MCF 10A (cell line): ENCODE measurements at regions of chr5 and their contacts with region 1.

Region 1: GRCh38 chr5:142108432-142109330 is at the start of gene NDFIP1:
- DNase-seq: peak; percentile 88
- H3K4me3 Mint-ChIP-seq: peak within 1 kb of the TSS; percentile 94
- H3K27ac Mint-ChIP-seq: peak within 1 kb of the TSS; percentile 86
- H3K4me1 Mint-ChIP-seq: peaks cover 16% of the 10 kb centered on the region
- H3K27me3 Mint-ChIP-seq: no peaks in the 10 kb centered on the region
- CTCF ChIP-seq: no peak
- total RNA-seq, gene NDFIP1: 50.8 and 61.6 TPM in 2 replicates

Region 2: GRCh38 chr5:141778206-141778605 is 330.5 kb before region 1 on chr5:
- CTCF ChIA-PET with region 1: no interaction called
- POLR2A ChIA-PET with region 1: no interaction called
- intact Hi-C with region 1: no loop called
- DNase-seq: peak; percentile 85
- H3K4me3 Mint-ChIP-seq: no peak overlapping the region
- H3K27ac Mint-ChIP-seq: peak overlapping the region; percentile 63
- H3K4me1 Mint-ChIP-seq: peaks cover 25% of the 10 kb centered on the region
- H3K27me3 Mint-ChIP-seq: no peaks in the 10 kb centered on the region
- CTCF ChIP-seq: no peak

Region 3: GRCh38 chr5:141992349-141992963 is 116.2 kb before region 1 on chr5:
- CTCF ChIA-PET with region 1: interaction called, 19 read pairs
- POLR2A ChIA-PET with region 1: interaction called, 3 read pairs
- intact Hi-C with region 1: no loop called
- DNase-seq: peak; percentile 88
- H3K4me3 Mint-ChIP-seq: no peak overlapping the region
- H3K27ac Mint-ChIP-seq: no peak overlapping the region
- H3K4me1 Mint-ChIP-seq: no peaks in the 10 kb centered on the region
- H3K27me3 Mint-ChIP-seq: no peaks in the 10 kb centered on the region
- CTCF ChIP-seq: peak; percentile 82

Region 4: GRCh38 chr5:142024771-142025304 is 83.8 kb before region 1 on chr5:
- CTCF ChIA-PET with region 1: interaction called, 5 read pairs
- POLR2A ChIA-PET with region 1: interaction called, 37 read pairs
- intact Hi-C with region 1: no loop called
- DNase-seq: peak; percentile 91
- H3K4me3 Mint-ChIP-seq: peak overlapping the region; percentile 83
- H3K27ac Mint-ChIP-seq: peak overlapping the region; percentile 96
- H3K4me1 Mint-ChIP-seq: peaks cover 6% of the 10 kb centered on the region
- H3K27me3 Mint-ChIP-seq: no peaks in the 10 kb centered on the region
- CTCF ChIP-seq: no peak

Region 5: GRCh38 chr5:142053426-142054151 is 55.1 kb before region 1 on chr5:
- CTCF ChIA-PET with region 1: interaction called, 6 read pairs
- POLR2A ChIA-PET with region 1: interaction called, 63 read pairs
- intact Hi-C with region 1: no loop called
- DNase-seq: peak; percentile 71
- H3K4me3 Mint-ChIP-seq: no peak overlapping the region
- H3K27ac Mint-ChIP-seq: no peak overlapping the region
- H3K4me1 Mint-ChIP-seq: peaks cover 33% of the 10 kb centered on the region
- H3K27me3 Mint-ChIP-seq: no peaks in the 10 kb centered on the region
- CTCF ChIP-seq: no peak

Region 6: GRCh38 chr5:142095651-142096330 is 12.9 kb before region 1 on chr5:
- CTCF ChIA-PET with region 1: interaction called, 9 read pairs
- POLR2A ChIA-PET with region 1: interaction called, 68 read pairs
- intact Hi-C with region 1: no loop called
- DNase-seq: no peak
- H3K4me3 Mint-ChIP-seq: no peak overlapping the region
- H3K27ac Mint-ChIP-seq: no peak overlapping the region
- H3K4me1 Mint-ChIP-seq: peaks cover 20% of the 10 kb centered on the region
- H3K27me3 Mint-ChIP-seq: no peaks in the 10 kb centered on the region
- CTCF ChIP-seq: no peak

Region 7: GRCh38 chr5:142120247-142120935 is 11.7 kb after region 1 on chr5:
- CTCF ChIA-PET with region 1: interaction called, 5 read pairs
- POLR2A ChIA-PET with region 1: interaction called, 30 read pairs
- intact Hi-C with region 1: no loop called
- DNase-seq: no peak
- H3K4me3 Mint-ChIP-seq: no peak overlapping the region
- H3K27ac Mint-ChIP-seq: peak overlapping the region; percentile 74
- H3K4me1 Mint-ChIP-seq: peaks cover 47% of the 10 kb centered on the region
- H3K27me3 Mint-ChIP-seq: no peaks in the 10 kb centered on the region
- CTCF ChIP-seq: no peak